Endothelial cell of umbilical vein (primary cell): ENCODE measurements at regions of chr3 and their contacts with region 1.

Region 1: DNA sequence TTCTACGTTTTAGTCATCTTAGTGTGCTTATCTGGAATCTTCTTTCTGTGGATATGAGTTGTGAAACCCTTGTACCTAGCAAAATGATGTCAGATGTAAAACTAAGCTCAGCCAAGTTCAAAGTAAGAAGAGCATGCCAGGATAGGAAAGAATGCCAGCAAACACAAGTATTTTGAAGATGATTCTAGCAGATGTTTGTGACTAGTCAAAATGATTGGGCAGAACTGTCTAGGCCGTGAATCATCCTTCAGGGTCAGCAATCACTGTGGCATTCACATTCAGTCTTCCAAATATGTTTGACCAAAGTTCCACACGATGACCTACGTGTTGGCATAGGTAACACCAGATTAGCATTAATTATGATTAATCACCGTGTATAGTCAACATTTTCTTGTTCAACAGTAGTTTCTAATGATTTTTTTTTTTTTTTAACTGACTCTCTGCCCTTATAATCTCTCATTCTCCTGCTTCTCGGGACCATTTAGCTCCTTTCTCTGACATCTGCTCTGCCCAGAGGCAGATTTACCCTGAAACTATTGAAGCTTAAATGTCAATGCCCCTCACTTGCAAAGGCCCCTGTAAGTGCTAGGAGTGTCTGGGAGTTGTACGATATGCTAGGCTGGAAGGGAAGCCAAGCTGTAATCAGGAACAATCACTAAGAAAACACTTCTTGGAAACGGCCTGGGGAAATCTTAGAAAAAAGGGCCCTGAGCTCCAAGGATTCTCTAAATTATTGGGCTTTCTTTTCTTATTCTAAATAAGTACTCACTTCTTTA is 5.7 kb upstream of the PLOD2 start:
- DNase-seq: peak; percentile 67
- H3K4me3 ChIP-seq: no peak overlapping the region
- H3K27ac ChIP-seq: peak overlapping the region; percentile 65
- H3K4me1 ChIP-seq: peaks cover 57% of the 10 kb centered on the region
- H3K27me3 ChIP-seq: no peaks in the 10 kb centered on the region
- CTCF ChIP-seq: no peak
- POLR2A ChIP-seq: no peak

Region 2: GRCh38 chr3:146156095-146156494 is 10.5 kb before region 1 on chr3:
- CTCF ChIA-PET with region 1: interaction called, 10 read pairs
- POLR2A ChIA-PET with region 1: interaction called, 6 read pairs
- dilution Hi-C with region 1: no loop called
- intact Hi-C with region 1: no loop called
- DNase-seq: peak; percentile 54
- H3K4me3 ChIP-seq: peak overlapping the region in 2 of 3 experiments; percentile 16 to 94
- H3K27ac ChIP-seq: peak overlapping the region; percentile 90
- H3K4me1 ChIP-seq: peaks cover 33% of the 10 kb centered on the region
- H3K27me3 ChIP-seq: no peaks in the 10 kb centered on the region
- CTCF ChIP-seq: no peak
- POLR2A ChIP-seq: peak; percentile 26

Region 3: GRCh38 chr3:146177519-146177918 is 10.9 kb after region 1 on chr3:
- CTCF ChIA-PET with region 1: interaction called, 25 read pairs
- POLR2A ChIA-PET with region 1: interaction called, 42 read pairs
- dilution Hi-C with region 1: no loop called
- intact Hi-C with region 1: loop called (anchors 1 kb)
- DNase-seq: no peak
- H3K4me3 ChIP-seq: peak overlapping the region in 1 of 3 experiments; percentile 26
- H3K27ac ChIP-seq: peak overlapping the region; percentile 99
- H3K4me1 ChIP-seq: peaks cover 37% of the 10 kb centered on the region
- H3K27me3 ChIP-seq: no peaks in the 10 kb centered on the region
- CTCF ChIP-seq: no peak
- POLR2A ChIP-seq: no peak

Region 4: DNA sequence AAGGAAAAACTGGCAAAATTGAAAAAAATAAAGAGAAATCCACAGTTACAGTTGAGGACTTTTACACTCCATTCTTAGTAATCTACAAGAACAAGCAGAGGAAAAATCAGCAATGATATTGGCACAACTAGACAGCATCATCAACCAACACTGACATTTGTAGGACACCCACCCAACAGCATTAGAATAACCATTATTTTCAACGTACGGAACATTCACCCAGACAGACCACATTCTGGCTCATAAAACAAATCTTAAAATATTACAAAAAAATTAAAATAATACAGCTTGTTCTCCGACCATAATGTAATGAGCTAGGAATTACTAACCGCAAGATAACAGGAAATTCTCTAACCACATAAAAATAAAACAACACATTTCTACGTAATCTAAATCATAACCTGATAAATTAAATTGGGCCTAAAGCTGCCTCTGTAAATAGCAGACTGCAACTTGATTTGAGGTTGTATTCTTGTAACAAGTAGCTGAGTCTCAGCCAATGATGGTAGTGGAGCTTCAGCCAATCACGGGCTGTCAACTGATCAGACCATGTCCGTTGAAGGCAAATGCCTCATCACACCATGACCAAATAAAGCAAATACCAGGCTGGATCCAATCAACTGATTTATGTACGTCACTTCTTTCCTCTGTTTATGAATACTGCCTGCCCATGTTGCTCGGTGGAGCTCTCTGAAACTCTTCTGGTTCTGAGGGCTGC is 75.0 kb after region 1 on chr3:
- CTCF ChIA-PET with region 1: no interaction called
- POLR2A ChIA-PET with region 1: no interaction called
- dilution Hi-C with region 1: no loop called
- intact Hi-C with region 1: no loop called
- DNase-seq: peak; percentile 59
- H3K4me3 ChIP-seq: no peak overlapping the region
- H3K27ac ChIP-seq: peak overlapping the region; percentile 71
- H3K4me1 ChIP-seq: peaks cover 13% of the 10 kb centered on the region
- H3K27me3 ChIP-seq: no peaks in the 10 kb centered on the region
- CTCF ChIP-seq: no peak
- POLR2A ChIP-seq: peak; percentile 29